Esophagus muscularis mucosa (tissue), 4 donors: ENCODE measurements at regions of chr6 and their contacts with region 1.

Region 1: DNA sequence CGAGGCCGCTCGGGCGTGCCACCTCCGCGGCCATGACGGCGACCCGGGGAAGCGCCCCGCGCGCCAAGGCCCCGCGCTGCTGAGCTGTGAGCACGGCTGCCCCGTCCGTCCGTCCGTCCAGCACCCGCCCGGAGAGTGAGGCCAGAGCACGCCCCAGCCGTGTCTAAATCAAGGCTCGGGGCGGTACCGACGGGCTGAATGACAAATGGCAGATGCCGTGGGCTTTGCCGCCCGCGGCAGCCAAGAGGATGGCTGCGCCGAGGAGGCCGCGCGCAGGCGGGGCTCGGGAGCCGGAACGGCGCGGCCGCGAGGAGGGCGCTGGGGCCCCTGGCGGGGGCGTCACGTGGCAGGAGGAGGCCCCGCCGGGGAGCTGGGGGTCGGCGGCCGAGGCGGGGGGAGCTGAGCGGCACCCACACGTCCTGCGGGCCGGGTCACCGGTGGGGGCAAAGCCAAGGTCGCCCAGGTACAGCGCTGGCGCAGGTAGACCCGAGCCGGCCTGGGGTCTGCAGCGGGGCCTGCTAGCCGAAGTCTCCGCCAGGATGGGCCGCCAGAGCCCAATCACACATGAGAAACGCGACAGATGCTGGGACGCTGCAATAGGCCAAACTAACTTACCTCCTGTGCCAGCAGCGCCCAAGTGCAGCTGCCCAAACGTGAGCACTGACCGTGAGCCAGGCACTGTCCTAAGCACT is at the start of gene PLAGL1:
- DNase-seq: no peak
- H3K4me3 ChIP-seq: peak within 1 kb of the TSS; percentile 59 to 80 (median 66)
- H3K27ac ChIP-seq: peak within 1 kb of the TSS; percentile 70 to 84 (median 79)
- H3K4me1 ChIP-seq: peaks cover 0 to 4% (median 2%) of the 10 kb centered on the region in 4 donors
- H3K27me3 ChIP-seq: peaks cover 0 to 4% (median 0%) of the 10 kb centered on the region in 4 donors
- CTCF ChIP-seq: no peak
- EP300 ChIP-seq: no peak
- POLR2A ChIP-seq: peak; percentile 20
- total RNA-seq, gene PLAGL1: 11.8 to 17.9 (median 16.0) TPM

Region 2: GRCh38 chr6:143941852-143942627 is 66.2 kb before region 1 on chr6:
- intact Hi-C with region 1: loop called (anchors 2 kb)
- DNase-seq: no peak
- H3K4me3 ChIP-seq: no peak overlapping the region
- H3K27ac ChIP-seq: no peak overlapping the region
- H3K4me1 ChIP-seq: no peaks in the 10 kb centered on the region
- H3K27me3 ChIP-seq: no peaks in the 10 kb centered on the region
- CTCF ChIP-seq: peak in 2 of 3 experiments; percentile 37 to 42
- EP300 ChIP-seq: no peak
- POLR2A ChIP-seq: no peak